ENCODE measurements at regions of chr15 and their contacts with region 1.

Region 1: GRCh38 chr15:72783563-72784237 is at the start of gene ADPGK:
- DNase-seq: peak; percentile 100
- ATAC-seq: peak; percentile 84
- H3K4me3 Mint-ChIP-seq: peak within 1 kb of the TSS; percentile 94
- H3K27ac Mint-ChIP-seq: peak within 1 kb of the TSS; percentile 99
- H3K4me1 Mint-ChIP-seq: peaks cover 46% of the 10 kb centered on the region
- H3K27me3 Mint-ChIP-seq: no peaks in the 10 kb centered on the region
- CTCF ChIP-seq: no peak
- total RNA-seq, gene ADPGK: 77.7 and 99.8 TPM in 2 replicates

Region 2: DNA sequence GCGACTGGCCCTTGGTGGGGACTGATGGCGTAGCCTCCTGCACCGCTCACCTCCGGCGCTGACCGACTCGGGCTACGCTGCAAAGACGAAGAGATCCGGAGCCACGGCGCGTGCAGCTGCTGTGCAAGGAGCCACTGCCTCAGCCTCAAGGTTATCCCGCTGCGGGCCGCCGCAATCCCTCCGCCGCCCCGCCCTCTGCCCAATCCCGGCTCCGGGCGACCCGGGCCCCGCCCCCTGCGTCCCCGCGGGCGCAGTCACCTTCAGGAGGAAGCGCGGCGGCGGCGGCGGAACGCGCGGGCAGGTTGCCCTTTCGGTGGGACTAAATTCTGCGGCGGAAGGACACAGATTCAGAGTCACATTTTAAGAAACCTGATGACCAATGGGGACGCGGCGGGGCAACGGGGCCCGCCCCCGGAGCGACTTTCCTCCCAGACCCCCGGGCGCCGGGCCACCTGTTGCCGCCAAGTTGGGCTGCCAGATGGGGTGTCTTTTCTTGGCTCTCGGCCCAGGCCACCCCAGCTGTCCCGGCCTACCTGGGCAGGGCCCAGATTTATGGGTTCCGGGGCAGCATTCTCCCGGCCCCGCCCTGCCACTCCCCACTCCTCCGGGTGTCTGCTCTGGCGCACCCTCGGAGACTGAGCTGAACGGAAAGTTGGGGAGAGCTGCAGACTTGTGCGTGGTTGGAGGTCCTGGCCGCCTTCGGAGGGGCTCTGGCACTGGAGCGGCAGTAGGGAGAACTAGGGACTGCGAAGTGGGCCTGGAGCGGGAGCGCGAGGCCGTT is 552.4 kb before region 1 on chr15 and contains the start of gene PKM:
- CTCF ChIA-PET with region 1: no interaction called
- POLR2A ChIA-PET with region 1: no interaction called
- intact Hi-C with region 1: loop called (anchors 1 kb)
- DNase-seq: peak; percentile 92
- ATAC-seq: peak; percentile 38
- H3K4me3 Mint-ChIP-seq: peak within 1 kb of the TSS; percentile 99
- H3K27ac Mint-ChIP-seq: peak within 1 kb of the TSS; percentile 98
- H3K4me1 Mint-ChIP-seq: peaks cover 41% of the 10 kb centered on the region
- H3K27me3 Mint-ChIP-seq: no peaks in the 10 kb centered on the region
- CTCF ChIP-seq: no peak
- total RNA-seq, gene PKM: 1,253 and 1,275 TPM in 2 replicates

Region 3: GRCh38 chr15:72473614-72474465 is 309.9 kb before region 1 on chr15 and contains the start of gene ARIH1:
- CTCF ChIA-PET with region 1: no interaction called
- POLR2A ChIA-PET with region 1: no interaction called
- intact Hi-C with region 1: loop called (anchors 1 kb)
- DNase-seq: peak; percentile 98
- ATAC-seq: peak; percentile 72
- H3K4me3 Mint-ChIP-seq: peak within 1 kb of the TSS; percentile 97
- H3K27ac Mint-ChIP-seq: peak within 1 kb of the TSS; percentile 99
- H3K4me1 Mint-ChIP-seq: peaks cover 39% of the 10 kb centered on the region
- H3K27me3 Mint-ChIP-seq: no peaks in the 10 kb centered on the region
- CTCF ChIP-seq: no peak
- total RNA-seq, gene ARIH1: 142 and 159 TPM in 2 replicates

Region 4: GRCh38 chr15:72749700-72750099 is 34.0 kb before region 1 on chr15:
- CTCF ChIA-PET with region 1: no interaction called
- POLR2A ChIA-PET with region 1: interaction called, 3 read pairs
- intact Hi-C with region 1: loop called (anchors 5 kb)
- DNase-seq: no peak
- ATAC-seq: no peak
- H3K4me3 Mint-ChIP-seq: no peak overlapping the region
- H3K27ac Mint-ChIP-seq: no peak overlapping the region
- H3K4me1 Mint-ChIP-seq: peaks cover 23% of the 10 kb centered on the region
- H3K27me3 Mint-ChIP-seq: no peaks in the 10 kb centered on the region
- CTCF ChIP-seq: no peak

Region 5: GRCh38 chr15:73051811-73052678 is 268.3 kb after region 1 on chr15 and contains the start of gene NEO1:
- CTCF ChIA-PET with region 1: no interaction called
- POLR2A ChIA-PET with region 1: no interaction called
- intact Hi-C with region 1: loop called (anchors 1 kb)
- DNase-seq: peak; percentile 61
- ATAC-seq: peak; percentile 78
- H3K4me3 Mint-ChIP-seq: peak within 1 kb of the TSS; percentile 81
- H3K27ac Mint-ChIP-seq: peak within 1 kb of the TSS; percentile 15
- H3K4me1 Mint-ChIP-seq: peaks cover 9% of the 10 kb centered on the region
- H3K27me3 Mint-ChIP-seq: peaks cover 25% of the 10 kb centered on the region
- CTCF ChIP-seq: no peak
- total RNA-seq, gene NEO1: 1.0 and 2.3 TPM in 2 replicates

Region 6: DNA sequence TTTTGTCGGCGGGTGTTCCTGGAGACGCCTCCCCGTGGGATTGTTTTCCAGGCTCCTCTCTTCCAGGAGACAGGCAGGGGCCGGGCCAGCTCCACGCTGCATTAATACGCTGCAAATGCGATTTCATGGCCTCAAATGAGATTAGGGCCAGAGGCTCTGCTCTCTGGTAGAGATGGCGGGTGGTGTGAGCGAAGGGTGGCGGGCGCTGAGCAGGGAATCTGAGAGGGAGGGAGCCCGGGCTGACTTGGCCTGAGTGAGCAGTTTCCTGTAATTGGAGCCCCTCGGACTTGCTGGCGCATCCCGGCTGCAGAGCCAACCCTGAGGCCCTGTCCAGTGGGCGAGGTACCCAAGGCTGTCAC is 1445.0 kb after region 1 on chr15:
- CTCF ChIA-PET with region 1: no interaction called
- POLR2A ChIA-PET with region 1: no interaction called
- intact Hi-C with region 1: no loop called
- DNase-seq: no peak
- ATAC-seq: no peak
- H3K4me3 Mint-ChIP-seq: no peak overlapping the region
- H3K27ac Mint-ChIP-seq: no peak overlapping the region
- H3K4me1 Mint-ChIP-seq: no peaks in the 10 kb centered on the region
- H3K27me3 Mint-ChIP-seq: peaks cover 17% of the 10 kb centered on the region
- CTCF ChIP-seq: no peak